ENCODE measurements at regions of chr4 and their contacts with region 1.

Region 1: GRCh38 chr4:113657586-113658233 is 103.8 kb downstream of the CAMK2D start:
- DNase-seq: no peak
- ATAC-seq: no peak
- H3K4me3 ChIP-seq: no peak overlapping the region
- H3K4me3 Mint-ChIP-seq: no peak overlapping the region
- H3K27ac ChIP-seq: no peak overlapping the region
- H3K27ac Mint-ChIP-seq: no peak overlapping the region
- H3K4me1 ChIP-seq: peaks cover 7 to 22% of the 10 kb centered on the region in 2 donors
- H3K4me1 Mint-ChIP-seq: peaks cover 50% of the 10 kb centered on the region
- H3K27me3 ChIP-seq: no peaks in the 10 kb centered on the region
- H3K27me3 Mint-ChIP-seq: no peaks in the 10 kb centered on the region
- CTCF ChIP-seq: no peak

Region 2: DNA sequence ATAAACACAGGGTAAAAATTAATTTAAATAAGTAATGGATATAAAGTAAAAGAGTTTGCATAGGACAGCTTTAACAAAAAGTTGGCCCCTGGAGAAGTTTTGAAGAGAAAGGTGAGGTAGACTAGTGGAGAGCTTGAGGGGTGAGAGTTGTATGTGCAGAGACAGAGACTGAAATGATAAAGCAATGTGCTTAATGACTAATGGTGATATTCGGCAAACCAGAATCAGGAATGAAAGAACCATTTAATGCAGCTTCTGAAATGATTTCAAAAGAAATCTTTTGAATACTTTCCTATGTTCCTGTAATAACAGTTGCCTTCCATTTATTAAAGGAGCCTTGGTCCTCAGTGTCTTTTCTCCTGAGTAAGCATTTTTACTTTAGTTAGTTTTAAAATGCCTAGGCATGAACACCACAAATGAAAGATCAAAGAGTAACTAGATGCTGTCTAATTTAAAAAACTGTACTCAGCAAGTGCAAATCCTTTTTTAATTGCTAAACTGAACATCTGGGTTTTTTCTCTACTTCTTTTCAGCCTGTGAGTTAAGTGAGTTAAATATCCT is 75.3 kb after region 1 on chr4:
- CTCF ChIA-PET with region 1: no interaction called
- POLR2A ChIA-PET with region 1: no interaction called
- intact Hi-C with region 1: loop called (anchors 5 kb)
- DNase-seq: no peak
- ATAC-seq: no peak
- H3K4me3 ChIP-seq: no peak overlapping the region
- H3K4me3 Mint-ChIP-seq: no peak overlapping the region
- H3K27ac ChIP-seq: no peak overlapping the region
- H3K27ac Mint-ChIP-seq: no peak overlapping the region
- H3K4me1 ChIP-seq: peaks cover 11 to 27% of the 10 kb centered on the region in 2 donors
- H3K4me1 Mint-ChIP-seq: peaks cover 65% of the 10 kb centered on the region
- H3K27me3 ChIP-seq: no peaks in the 10 kb centered on the region
- H3K27me3 Mint-ChIP-seq: no peaks in the 10 kb centered on the region
- CTCF ChIP-seq: no peak